Cardiac septum (tissue), 1 donor: ENCODE measurements at regions of chr2 and their contacts with region 1.

Region 1: GRCh38 chr2:85288244-85288725 is 39.5 kb downstream of the TGOLN2 start:
- DNase-seq: peak; percentile 17

Region 2: DNA sequence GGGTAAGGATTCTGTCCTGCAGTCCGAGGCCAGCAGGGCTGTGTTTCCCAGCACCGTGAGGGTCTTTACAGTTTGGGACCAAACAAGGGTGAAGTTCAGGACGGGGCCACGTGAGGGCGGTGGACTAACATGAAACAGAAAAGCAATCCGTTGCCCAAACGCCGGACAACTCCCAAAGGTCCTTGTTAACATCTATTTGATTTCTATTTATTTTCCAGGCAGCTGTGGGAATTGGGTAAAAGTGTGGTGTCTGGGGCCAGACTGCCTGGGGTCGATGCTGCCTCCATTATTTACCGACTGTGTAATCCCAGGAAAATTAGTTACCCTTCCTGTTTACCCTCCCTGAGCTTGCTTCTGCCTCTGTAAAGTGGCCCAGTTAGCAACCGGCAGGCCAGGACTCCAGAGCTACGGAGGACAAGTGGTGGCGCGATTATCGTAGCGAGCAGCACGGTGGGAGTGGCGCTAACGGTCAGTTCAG is 221.4 kb before region 1 on chr2:
- intact Hi-C with region 1: loop called (anchors 1 kb)
- DNase-seq: peak; percentile 79

Region 3: GRCh38 chr2:85302121-85302520 is 13.8 kb after region 1 on chr2:
- intact Hi-C with region 1: no loop called
- DNase-seq: no peak

Region 4: DNA sequence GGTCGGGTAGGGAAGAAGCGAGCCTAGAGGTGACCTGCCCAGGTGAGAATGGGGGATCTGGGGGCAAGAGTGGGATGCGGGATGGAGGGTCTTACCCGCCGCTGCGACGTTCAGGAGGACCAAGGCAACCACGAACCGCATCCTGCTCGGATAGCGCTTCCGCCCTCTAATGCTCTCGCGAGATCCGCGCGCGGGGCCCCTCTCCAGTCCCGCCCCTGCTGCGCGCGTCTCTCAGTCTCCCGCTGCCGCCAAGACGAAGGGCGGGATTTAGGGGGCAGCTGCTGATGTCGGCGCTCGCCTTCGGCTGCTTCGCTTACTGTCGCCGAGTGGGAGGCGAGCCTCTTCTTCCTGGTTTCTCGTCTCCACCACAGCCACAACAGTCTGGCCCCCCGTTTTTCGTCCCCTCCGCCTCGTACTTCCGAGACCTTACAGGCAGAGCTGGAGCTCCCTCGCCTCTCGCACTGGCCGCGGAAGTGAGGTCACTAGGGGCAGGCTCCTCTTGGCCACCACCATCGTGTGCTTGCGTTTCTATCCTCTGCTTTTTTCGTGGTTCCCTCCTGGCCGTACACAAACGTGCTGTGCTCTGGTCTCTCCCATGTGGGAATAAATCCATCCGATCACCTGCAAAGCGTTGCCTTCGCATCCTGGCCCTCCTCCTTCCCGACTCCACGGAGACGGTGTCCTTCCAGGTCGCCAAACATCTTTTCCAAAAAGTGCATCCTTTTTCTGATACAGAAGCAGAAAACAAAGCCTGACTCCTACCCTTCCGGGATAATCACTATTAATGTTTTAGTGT is 39.7 kb after region 1 on chr2 and contains the start of gene TGOLN2:
- intact Hi-C with region 1: no loop called
- DNase-seq: peak; percentile 96
- total RNA-seq, gene TGOLN2: 75.1 TPM